IMR-90 (cell line): ENCODE measurements at regions of chr17 and their contacts with region 1.

Region 1: GRCh38 chr17:55983096-55983495 is 170.2 kb upstream of the ANKFN1 start:
- DNase-seq: no peak
- ATAC-seq: no peak
- H3K4me3 ChIP-seq: no peak overlapping the region
- H3K27ac ChIP-seq: no peak overlapping the region
- H3K4me1 ChIP-seq: no peaks in the 10 kb centered on the region
- H3K27me3 ChIP-seq: no peaks in the 10 kb centered on the region
- CTCF ChIP-seq: no peak
- POLR2A ChIP-seq: no peak
- RAD21 ChIP-seq: no peak

Region 2: GRCh38 chr17:55513885-55514591 is 469.1 kb before region 1 on chr17:
- CTCF ChIA-PET with region 1: no interaction called
- POLR2A ChIA-PET with region 1: no interaction called
- dilution Hi-C with region 1: no loop called
- in situ Hi-C with region 1: no loop called
- intact Hi-C with region 1: no loop called
- DNase-seq: peak; percentile 55
- ATAC-seq: peak; percentile 72
- H3K4me3 ChIP-seq: no peak overlapping the region
- H3K27ac ChIP-seq: no peak overlapping the region
- H3K4me1 ChIP-seq: no peaks in the 10 kb centered on the region
- H3K27me3 ChIP-seq: peaks cover 11% of the 10 kb centered on the region
- CTCF ChIP-seq: peak; percentile 95
- POLR2A ChIP-seq: no peak
- RAD21 ChIP-seq: peak; percentile 91

Region 3: DNA sequence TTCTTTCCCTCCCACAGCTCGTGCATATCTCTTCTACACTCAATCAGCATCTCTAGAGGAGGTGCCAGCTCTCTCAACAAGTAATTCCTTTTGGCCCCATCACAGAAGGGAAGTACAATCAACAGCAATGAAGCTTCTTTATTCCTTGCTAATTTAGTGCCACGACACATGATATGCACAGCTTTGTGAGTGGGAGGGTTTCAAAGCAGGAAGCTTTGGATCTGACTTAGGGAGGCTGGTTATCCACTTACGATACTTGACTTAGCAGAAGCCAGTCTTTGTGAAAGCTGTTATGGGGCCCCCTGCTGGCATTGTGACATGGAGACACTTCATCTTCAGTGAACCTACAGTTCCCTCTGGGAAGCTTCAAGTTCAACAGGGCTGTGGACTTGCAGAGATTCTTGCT is 341.4 kb before region 1 on chr17:
- CTCF ChIA-PET with region 1: no interaction called
- POLR2A ChIA-PET with region 1: no interaction called
- dilution Hi-C with region 1: no loop called
- in situ Hi-C with region 1: no loop called
- intact Hi-C with region 1: no loop called
- DNase-seq: peak; percentile 63
- ATAC-seq: peak; percentile 94
- H3K4me3 ChIP-seq: no peak overlapping the region
- H3K27ac ChIP-seq: no peak overlapping the region
- H3K4me1 ChIP-seq: no peaks in the 10 kb centered on the region
- H3K27me3 ChIP-seq: peaks cover 4% of the 10 kb centered on the region
- CTCF ChIP-seq: peak; percentile 54
- POLR2A ChIP-seq: no peak
- RAD21 ChIP-seq: peak; percentile 46

Region 4: GRCh38 chr17:55895112-55895759 is 87.9 kb before region 1 on chr17:
- CTCF ChIA-PET with region 1: no interaction called
- POLR2A ChIA-PET with region 1: no interaction called
- dilution Hi-C with region 1: no loop called
- in situ Hi-C with region 1: no loop called
- intact Hi-C with region 1: loop called (anchors 5 kb)
- DNase-seq: no peak
- ATAC-seq: no peak
- H3K4me3 ChIP-seq: no peak overlapping the region
- H3K27ac ChIP-seq: no peak overlapping the region
- H3K4me1 ChIP-seq: no peaks in the 10 kb centered on the region
- H3K27me3 ChIP-seq: no peaks in the 10 kb centered on the region
- CTCF ChIP-seq: no peak
- POLR2A ChIP-seq: no peak
- RAD21 ChIP-seq: no peak

Region 5: DNA sequence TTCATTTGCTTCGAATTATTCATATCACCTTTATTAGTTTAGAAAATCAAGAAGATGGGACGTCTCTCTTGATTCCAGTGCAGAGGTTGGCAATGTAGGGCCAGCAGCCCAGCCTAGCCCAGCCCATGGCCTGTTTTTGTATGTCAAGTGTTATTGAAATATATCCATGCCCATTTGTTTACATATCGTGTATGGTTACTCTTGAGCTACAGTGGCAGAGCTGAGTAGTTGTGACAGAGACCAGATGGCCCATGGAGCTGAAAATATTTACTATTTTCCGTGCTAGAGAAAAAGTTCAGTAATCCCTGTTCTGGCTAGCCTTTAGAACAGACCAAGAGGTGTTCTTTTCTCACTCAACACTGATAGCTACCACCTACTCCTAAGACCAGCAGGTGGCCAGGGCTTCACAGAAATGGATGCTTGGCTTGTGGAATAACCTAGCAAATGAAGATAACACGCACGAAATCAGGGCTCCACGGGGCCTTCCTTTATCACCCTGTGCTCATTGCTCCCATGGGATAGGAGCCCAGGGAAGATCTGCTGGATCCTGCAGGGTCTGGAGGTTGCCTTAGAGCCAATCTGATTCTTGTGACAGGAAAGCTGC is 47.0 kb after region 1 on chr17:
- CTCF ChIA-PET with region 1: no interaction called
- POLR2A ChIA-PET with region 1: no interaction called
- dilution Hi-C with region 1: no loop called
- in situ Hi-C with region 1: no loop called
- intact Hi-C with region 1: no loop called
- DNase-seq: no peak
- ATAC-seq: no peak
- H3K4me3 ChIP-seq: no peak overlapping the region
- H3K27ac ChIP-seq: no peak overlapping the region
- H3K4me1 ChIP-seq: no peaks in the 10 kb centered on the region
- H3K27me3 ChIP-seq: no peaks in the 10 kb centered on the region
- CTCF ChIP-seq: no peak
- POLR2A ChIP-seq: no peak
- RAD21 ChIP-seq: no peak